ENCODE measurements at regions of chr22 and their contacts with region 1.

Region 1: GRCh38 chr22:24938741-24939341 is 7.7 kb downstream of the LHFPL7 start:
- DNase-seq: peak; percentile 67

Region 2: GRCh38 chr22:25048659-25049647 is 110.1 kb after region 1 on chr22:
- in situ Hi-C with region 1: loop called (anchors 25 kb)
- DNase-seq: peak; percentile 69

Measured in G401 (cell line).